B cell (primary cell): ENCODE measurements at regions of chr15 and their contacts with region 1.

Region 1: DNA sequence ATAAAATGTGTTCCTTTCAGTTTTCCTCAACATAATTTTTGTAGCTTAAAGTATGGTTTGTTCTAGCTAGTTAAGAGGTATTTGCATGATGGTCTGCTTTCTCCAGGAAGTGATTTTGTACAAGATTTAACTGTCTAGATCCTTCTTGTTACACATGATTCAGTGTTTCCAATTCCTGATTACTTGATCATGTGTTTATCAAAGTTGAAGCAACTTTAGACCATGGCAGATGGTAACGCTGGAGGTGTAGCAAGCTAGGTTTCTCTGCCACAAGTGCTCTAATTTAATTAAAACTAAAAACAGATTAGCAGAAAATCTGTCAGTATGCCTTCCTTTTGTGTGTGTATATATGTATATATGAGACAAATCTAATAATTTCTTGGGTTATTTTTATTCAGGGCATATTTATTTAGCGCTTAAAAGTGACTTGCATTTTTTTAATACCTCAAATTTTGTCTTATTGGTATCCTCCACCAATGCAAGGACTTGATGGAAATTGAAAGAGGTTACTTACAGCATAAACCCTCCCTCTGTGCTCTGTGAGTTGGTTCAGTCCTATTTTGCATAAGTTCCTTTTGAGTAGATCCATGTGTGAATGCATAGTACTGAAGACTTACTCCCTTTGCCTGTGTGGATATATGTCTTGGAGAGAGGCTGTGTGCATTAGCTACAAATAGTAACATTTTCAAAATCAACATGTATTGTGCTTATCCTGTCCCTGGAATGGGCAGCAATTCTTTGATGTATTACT is 157.3 kb upstream of the CGNL1 start:
- DNase-seq: peak; percentile 48
- ATAC-seq: no peak
- H3K4me3 ChIP-seq: peak overlapping the region in 1 of 5 experiments; percentile 20
- H3K4me3 Mint-ChIP-seq: peak overlapping the region; percentile 77
- H3K27ac ChIP-seq: no peak overlapping the region
- H3K27ac Mint-ChIP-seq: no peak overlapping the region
- H3K4me1 ChIP-seq: peaks cover 12 to 18% of the 10 kb centered on the region in 2 donors
- H3K4me1 Mint-ChIP-seq: peaks cover 40% of the 10 kb centered on the region
- H3K27me3 ChIP-seq: no peaks in the 10 kb centered on the region
- H3K27me3 Mint-ChIP-seq: no peaks in the 10 kb centered on the region
- CTCF ChIP-seq: no peak

Region 2: DNA sequence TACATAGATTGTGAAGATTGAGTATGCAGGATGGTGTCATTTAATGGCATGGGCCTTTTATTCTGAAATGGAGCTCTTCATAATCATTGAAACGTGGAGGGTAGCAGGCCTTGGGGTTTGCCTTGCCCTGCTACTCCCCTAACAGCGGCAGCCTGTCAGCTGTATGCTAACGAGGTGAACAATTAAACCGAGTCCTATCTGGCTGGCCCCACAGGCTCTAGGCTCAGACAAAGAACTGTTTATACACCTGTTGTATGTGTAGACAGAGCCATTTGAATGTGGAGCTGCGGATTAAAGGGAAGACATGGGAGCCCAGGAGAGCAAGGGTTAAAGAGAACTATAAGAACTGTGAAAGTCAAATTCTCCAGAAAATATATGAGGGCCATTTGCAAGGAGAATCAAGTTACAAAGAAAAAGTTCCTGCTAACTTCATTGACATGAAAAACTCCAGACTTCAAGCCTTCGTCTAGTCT is 40.6 kb after region 1 on chr15:
- CTCF ChIA-PET with region 1: interaction called, 3 read pairs
- POLR2A ChIA-PET with region 1: interaction called, 3 read pairs
- intact Hi-C with region 1: loop called (anchors 5 kb)
- DNase-seq: peak; percentile 64
- ATAC-seq: peak; percentile 97
- H3K4me3 ChIP-seq: peak overlapping the region in 1 of 5 experiments; percentile 27
- H3K4me3 Mint-ChIP-seq: peak overlapping the region; percentile 62
- H3K27ac ChIP-seq: peak overlapping the region; percentile 32 to 71
- H3K27ac Mint-ChIP-seq: peak overlapping the region; percentile 60
- H3K4me1 ChIP-seq: peaks cover 7 to 15% of the 10 kb centered on the region in 2 donors
- H3K4me1 Mint-ChIP-seq: peaks cover 17% of the 10 kb centered on the region
- H3K27me3 ChIP-seq: no peaks in the 10 kb centered on the region
- H3K27me3 Mint-ChIP-seq: no peaks in the 10 kb centered on the region
- CTCF ChIP-seq: no peak